Vagina (tissue), 2 donors: ENCODE measurements at regions of chr1 and their contacts with region 1.

Region 1: DNA sequence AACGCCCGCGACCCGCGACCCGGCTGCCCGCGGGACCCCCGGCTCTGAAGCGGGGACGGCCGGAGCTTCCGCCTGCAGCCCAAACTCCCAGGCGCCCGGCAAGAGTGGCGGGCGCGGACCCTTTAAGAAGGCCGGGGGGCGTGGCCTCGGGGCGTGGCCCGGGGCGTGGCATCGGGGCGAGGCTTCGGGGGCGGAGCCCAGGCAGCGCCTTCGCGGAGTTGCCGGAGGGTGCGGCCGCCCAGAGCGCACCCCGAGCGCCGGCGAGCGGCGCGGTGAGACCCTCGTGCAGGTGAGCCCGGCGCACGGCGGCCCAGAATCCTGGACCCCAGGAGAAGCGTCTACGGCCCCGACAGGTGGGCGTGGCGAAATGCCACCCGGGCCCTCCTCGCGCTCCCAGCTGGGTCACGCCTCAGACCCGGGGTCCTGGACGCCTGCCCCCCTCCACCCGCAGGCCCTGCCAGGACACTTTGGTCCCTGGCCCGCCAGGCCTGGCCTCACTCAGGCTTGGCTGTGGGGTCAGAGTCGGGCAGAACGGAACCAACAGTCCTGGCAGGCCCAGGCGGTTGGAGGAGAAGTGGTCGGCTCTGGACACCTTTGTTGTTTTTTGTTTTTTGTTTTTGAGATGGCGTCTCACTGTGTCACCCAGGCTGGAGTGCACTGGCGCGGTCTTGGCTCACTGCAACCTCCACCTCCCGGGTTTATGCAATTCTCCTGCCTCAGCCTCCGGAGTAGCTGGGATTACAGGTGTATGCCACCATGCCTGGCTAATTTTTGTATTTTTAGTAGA is 14.4 kb downstream of the RNF223 start:
- DNase-seq: no peak
- H3K4me3 ChIP-seq: peak overlapping the region; percentile 46 to 69
- H3K27ac ChIP-seq: no peak overlapping the region
- H3K4me1 ChIP-seq: peaks cover 38% of the 10 kb centered on the region
- H3K27me3 ChIP-seq: peaks cover 5% of the 10 kb centered on the region
- CTCF ChIP-seq: peak in 1 of 3 experiments; percentile 17
- POLR2A ChIP-seq: no peak

Region 2: GRCh38 chr1:983799-984473 is 75.8 kb before region 1 on chr1:
- intact Hi-C with region 1: loop called (anchors 5 kb)
- DNase-seq: no peak
- H3K4me3 ChIP-seq: peak overlapping the region in 1 of 2 donors; percentile 16
- H3K27ac ChIP-seq: no peak overlapping the region
- H3K4me1 ChIP-seq: no peaks in the 10 kb centered on the region
- H3K27me3 ChIP-seq: no peaks in the 10 kb centered on the region
- CTCF ChIP-seq: peak; percentile 39 to 98 (median 49)
- POLR2A ChIP-seq: no peak

Region 3: GRCh38 chr1:999725-1000356 is 59.8 kb before region 1 on chr1 and contains the start of gene HES4:
- intact Hi-C with region 1: no loop called
- DNase-seq: no peak
- H3K4me3 ChIP-seq: peak within 1 kb of the TSS; percentile 61 to 73
- H3K27ac ChIP-seq: peak within 1 kb of the TSS; percentile 99
- H3K4me1 ChIP-seq: peaks cover 39% of the 10 kb centered on the region
- H3K27me3 ChIP-seq: no peaks in the 10 kb centered on the region
- CTCF ChIP-seq: no peak
- POLR2A ChIP-seq: peak; percentile 32 to 78
- total RNA-seq, gene HES4: 34.6 TPM

Region 4: GRCh38 chr1:1091663-1092478 is 32.2 kb after region 1 on chr1:
- intact Hi-C with region 1: no loop called
- DNase-seq: no peak
- H3K4me3 ChIP-seq: no peak overlapping the region
- H3K27ac ChIP-seq: no peak overlapping the region
- H3K4me1 ChIP-seq: no peaks in the 10 kb centered on the region
- H3K27me3 ChIP-seq: no peaks in the 10 kb centered on the region
- CTCF ChIP-seq: no peak
- POLR2A ChIP-seq: no peak